A549 (cell line): ENCODE measurements at regions of chr9 and their contacts with region 1.

Region 1: GRCh38 chr9:125255781-125256391 is 5.7 kb upstream of the GAPVD1 start:
- DNase-seq: peak; percentile 39 to 40
- ATAC-seq: peak; percentile 77 to 90; a peak in 5 of 6 replicates
- H3K4me3 ChIP-seq: no peak overlapping the region
- H3K27ac ChIP-seq: no peak overlapping the region
- H3K4me1 ChIP-seq: peaks cover 3% of the 10 kb centered on the region; the same call in 1 of the 3 replicates
- CTCF ChIP-seq: peak; percentile 60
- EP300 ChIP-seq: no peak
- POLR2A ChIP-seq: no peak
- RAD21 ChIP-seq: peak; percentile 77 to 87

Region 2: GRCh38 chr9:125099816-125100215 is 156.1 kb before region 1 on chr9:
- CTCF ChIA-PET with region 1: no interaction called
- POLR2A ChIA-PET with region 1: no interaction called
- DNase-seq: no peak
- ATAC-seq: no peak
- H3K4me3 ChIP-seq: no peak overlapping the region
- H3K27ac ChIP-seq: no peak overlapping the region
- H3K4me1 ChIP-seq: no peaks in the 10 kb centered on the region
- CTCF ChIP-seq: no peak
- EP300 ChIP-seq: no peak
- POLR2A ChIP-seq: no peak
- RAD21 ChIP-seq: no peak

Region 3: GRCh38 chr9:125268394-125269013 is 12.6 kb after region 1 on chr9:
- CTCF ChIA-PET with region 1: interaction called, 14 read pairs
- POLR2A ChIA-PET with region 1: no interaction called
- DNase-seq: no peak
- ATAC-seq: no peak
- H3K4me3 ChIP-seq: no peak overlapping the region
- H3K27ac ChIP-seq: no peak overlapping the region
- H3K4me1 ChIP-seq: peaks cover 18% of the 10 kb centered on the region
- CTCF ChIP-seq: no peak
- EP300 ChIP-seq: no peak
- POLR2A ChIP-seq: no peak
- RAD21 ChIP-seq: no peak

Region 4: GRCh38 chr9:125361837-125362531 is 106.1 kb after region 1 on chr9:
- CTCF ChIA-PET with region 1: interaction called, 32 read pairs
- POLR2A ChIA-PET with region 1: no interaction called
- DNase-seq: peak in 1 of 2 experiments; percentile 51
- ATAC-seq: peak; percentile 50 to 75; a peak in 5 of 6 replicates
- H3K4me3 ChIP-seq: no peak overlapping the region
- H3K27ac ChIP-seq: no peak overlapping the region
- H3K4me1 ChIP-seq: no peaks in the 10 kb centered on the region
- CTCF ChIP-seq: peak; percentile 22; the same call in 1 of the 3 replicates
- EP300 ChIP-seq: no peak
- POLR2A ChIP-seq: no peak
- RAD21 ChIP-seq: peak in 1 of 2 experiments; percentile 26; a peak in 1 of 5 replicates

Region 5: DNA sequence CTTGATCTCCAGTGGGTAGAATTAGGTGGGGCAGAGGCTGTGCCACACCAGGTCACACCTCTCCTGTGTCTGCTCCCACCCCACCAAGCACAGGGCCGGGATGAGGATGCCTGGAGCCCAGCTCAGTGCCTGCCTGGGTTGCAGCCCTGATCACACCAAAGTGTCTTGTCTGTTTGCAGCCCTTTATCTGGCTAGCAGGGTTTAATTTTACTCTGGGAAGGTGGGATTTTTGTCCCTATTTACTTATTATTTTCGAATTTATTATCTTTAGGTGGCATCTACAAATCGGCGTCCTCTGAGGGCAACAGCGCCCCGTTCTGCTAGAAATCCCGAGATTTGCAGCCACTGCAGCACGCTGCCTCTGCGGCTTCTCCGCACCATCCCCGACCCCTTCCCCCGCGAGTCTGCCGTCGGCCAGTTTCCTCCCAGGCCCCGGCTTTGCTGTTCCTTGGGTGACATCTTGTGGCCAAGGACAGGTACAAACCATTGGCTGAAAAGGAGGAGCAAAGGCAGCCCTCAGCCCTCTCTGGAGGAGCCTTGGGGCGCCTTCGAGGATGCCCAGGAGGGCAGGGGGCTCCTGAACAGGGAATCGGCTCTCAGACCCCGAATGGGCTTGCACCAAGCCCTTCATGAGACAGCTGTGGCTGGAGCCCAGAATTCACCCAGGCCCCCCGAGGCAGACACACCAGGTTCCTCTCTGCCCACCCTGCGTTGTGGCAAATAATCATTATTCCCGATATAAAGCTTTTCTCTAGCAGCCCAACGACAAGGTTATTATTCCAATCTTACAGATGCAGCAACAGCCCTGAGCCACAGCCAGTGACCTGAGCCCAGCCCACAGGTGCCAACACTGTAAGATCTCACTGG is 118.8 kb after region 1 on chr9:
- CTCF ChIA-PET with region 1: interaction called, 14 read pairs
- POLR2A ChIA-PET with region 1: no interaction called
- DNase-seq: peak; percentile 72 to 77
- ATAC-seq: peak; percentile 85 to 94
- H3K4me3 ChIP-seq: peak overlapping the region; percentile 27; the same call in 2 of the 3 replicates
- H3K27ac ChIP-seq: peak overlapping the region in 1 of 2 experiments; percentile 55; a peak in 2 of 6 replicates
- H3K4me1 ChIP-seq: peaks cover 7% of the 10 kb centered on the region; the same call in 2 of the 3 replicates
- CTCF ChIP-seq: peak; percentile 91
- EP300 ChIP-seq: no peak
- POLR2A ChIP-seq: no peak
- RAD21 ChIP-seq: peak; percentile 98